Sciatic nerve (tissue), 2 donors: ENCODE measurements at regions of chr17 and their contacts with region 1.

Region 1: DNA sequence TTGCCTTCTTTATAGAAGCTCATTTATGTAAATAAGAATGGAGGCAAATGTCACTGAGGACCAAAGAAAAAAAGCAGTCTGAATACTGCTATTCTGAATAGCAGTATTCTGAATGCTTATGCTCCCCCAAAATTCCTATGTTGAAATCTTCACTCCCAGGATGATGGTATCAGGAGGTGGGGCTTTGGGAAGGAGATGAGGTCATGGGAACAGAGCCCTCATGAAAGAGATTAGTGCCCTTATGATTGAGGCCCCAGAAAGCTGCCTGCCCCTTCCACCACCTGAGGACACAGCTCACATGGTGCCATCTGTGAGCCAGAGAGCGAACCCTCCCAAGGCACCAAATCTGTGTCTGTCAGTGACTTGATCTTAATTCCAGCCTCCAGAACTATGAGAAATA is 28.8 kb downstream of the HEATR6 start:
- DNase-seq: no peak
- ATAC-seq: no peak

Region 2: DNA sequence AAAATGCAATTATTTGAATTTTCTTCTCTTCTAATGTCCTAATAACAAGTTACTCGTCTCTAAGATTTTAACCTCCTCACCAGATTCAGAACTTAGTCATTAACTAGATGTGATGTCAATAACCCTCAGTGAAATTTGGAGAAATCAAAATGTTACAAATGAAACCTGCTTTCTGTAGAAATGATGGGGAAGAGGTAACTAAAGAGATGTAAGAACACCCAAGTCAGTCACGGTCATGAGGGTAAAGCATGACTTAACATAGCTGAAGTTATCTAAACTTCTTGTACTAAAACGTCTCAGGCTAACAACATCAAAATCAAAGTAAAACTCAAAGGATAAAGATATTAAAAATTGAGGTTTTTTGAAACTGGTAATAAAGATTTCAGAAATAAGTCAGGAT is 95.1 kb before region 1 on chr17:
- intact Hi-C with region 1: loop called (anchors 5 kb)
- DNase-seq: no peak
- ATAC-seq: no peak

Region 3: GRCh38 chr17:60102632-60103096 is 52.7 kb after region 1 on chr17:
- intact Hi-C with region 1: no loop called
- DNase-seq: no peak
- ATAC-seq: peak; percentile 68